ENCODE measurements at regions of chr2 and their contacts with region 1.

Region 1: DNA sequence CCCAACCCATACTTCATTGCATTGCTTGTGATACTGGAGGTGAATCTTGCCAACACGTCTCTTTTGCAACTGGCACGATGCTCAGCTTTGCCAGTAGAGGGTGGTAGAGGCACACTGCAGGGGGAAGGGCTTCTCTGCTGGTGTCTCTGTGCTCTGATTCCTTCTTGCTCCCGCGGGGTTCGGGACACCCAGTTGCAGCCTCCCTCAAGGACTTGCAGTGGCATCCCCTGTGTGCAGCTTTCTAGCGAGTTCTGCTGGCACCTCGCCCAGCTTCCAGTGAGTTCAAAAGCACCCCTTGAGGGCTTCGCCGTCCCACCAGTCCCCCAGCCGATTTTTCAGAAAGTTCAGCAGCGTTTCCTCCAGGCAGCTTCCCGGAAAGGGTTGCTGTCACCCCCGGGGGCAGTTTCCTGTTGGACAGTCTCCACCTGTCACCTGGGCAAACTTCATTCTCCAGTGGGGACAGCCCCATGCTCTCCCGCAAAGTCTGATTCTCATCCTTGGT is 35.3 kb upstream of the EN1 start:
- DNase-seq: peak; percentile 41 to 79
- ATAC-seq: peak; percentile 88 to 92 (median 90)
- H3K4me3 ChIP-seq: peak overlapping the region; percentile 30
- H3K4me3 Mint-ChIP-seq: peak overlapping the region; percentile 81
- H3K27ac ChIP-seq: no peak overlapping the region
- H3K27ac Mint-ChIP-seq: peak overlapping the region in 1 of 2 donors; percentile 44
- H3K4me1 ChIP-seq: peaks cover 4% of the 10 kb centered on the region
- H3K4me1 Mint-ChIP-seq: peaks cover 17 to 19% of the 10 kb centered on the region in 2 donors
- H3K27me3 ChIP-seq: no peaks in the 10 kb centered on the region
- H3K27me3 Mint-ChIP-seq: peaks cover 18 to 24% of the 10 kb centered on the region in 2 donors
- CTCF ChIP-seq: peak; percentile 74

Region 2: DNA sequence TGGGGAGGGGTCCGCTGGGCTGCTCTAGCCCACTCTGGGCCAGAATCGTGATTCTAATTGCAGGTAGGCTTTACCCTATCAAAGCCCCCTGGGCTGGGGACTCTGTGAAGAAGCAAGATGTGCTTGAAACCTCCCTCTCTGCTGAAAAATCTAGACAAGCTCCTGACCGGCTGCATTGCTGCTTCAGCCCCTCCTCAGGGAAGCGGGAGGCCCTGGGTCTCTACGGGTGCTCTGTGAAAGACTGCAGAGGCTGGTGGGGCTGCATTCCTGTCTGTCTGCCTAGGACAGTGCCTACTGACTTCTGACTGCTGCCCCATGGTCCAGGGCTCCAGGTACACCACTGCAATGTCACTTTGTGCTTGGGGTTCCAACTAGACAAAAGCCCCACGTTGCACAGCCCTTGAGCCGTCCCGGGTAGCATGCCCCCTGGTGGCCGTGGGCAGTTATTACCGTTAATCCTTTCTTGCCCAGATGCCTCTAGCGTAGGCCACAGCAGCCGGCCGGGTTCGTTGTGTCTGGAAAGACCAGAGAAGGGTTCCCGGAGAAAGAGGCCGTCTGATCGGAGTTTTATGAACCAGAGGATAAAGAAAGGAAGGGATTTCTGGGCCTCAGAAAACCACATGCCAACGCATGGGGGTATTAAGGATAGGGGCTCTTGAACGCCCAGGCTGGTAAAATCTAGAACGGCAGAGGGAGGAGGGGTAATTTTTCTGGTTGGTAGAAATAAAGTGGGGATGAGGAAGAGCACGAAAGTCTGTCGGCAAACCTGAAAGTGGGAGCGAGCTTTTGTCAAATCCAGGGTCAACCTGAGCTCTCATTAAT is 291.7 kb after region 1 on chr2:
- intact Hi-C with region 1: loop called (anchors 2 kb)
- DNase-seq: peak; percentile 43 to 70
- ATAC-seq: peak; percentile 53 to 78 (median 56)
- H3K4me3 ChIP-seq: no peak overlapping the region
- H3K4me3 Mint-ChIP-seq: no peak overlapping the region
- H3K27ac ChIP-seq: no peak overlapping the region
- H3K27ac Mint-ChIP-seq: no peak overlapping the region
- H3K4me1 ChIP-seq: no peaks in the 10 kb centered on the region
- H3K4me1 Mint-ChIP-seq: no peaks in the 10 kb centered on the region
- H3K27me3 ChIP-seq: no peaks in the 10 kb centered on the region
- H3K27me3 Mint-ChIP-seq: no peaks in the 10 kb centered on the region
- CTCF ChIP-seq: peak; percentile 82

Region 3: DNA sequence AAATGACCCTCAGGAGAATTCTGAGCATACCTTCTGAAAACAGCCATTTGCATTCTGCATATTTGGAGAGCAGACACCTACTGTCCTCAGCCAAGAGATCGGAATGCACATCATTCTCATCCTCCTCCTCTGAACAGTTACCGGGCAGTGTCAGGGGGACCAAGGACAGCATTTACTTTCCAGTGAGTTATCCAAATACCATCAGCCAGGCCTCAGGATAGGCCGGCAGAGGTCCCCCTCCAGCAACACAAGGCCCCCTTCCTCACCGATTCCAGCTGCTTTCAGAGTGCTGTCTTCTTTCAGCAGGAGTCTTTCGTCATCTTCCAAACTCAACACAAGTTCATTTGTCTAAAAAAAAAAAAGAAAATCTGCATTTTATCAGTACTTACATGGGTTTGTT is 428.6 kb after region 1 on chr2:
- intact Hi-C with region 1: loop called (anchors 1 kb)
- DNase-seq: no peak
- ATAC-seq: no peak
- H3K4me3 ChIP-seq: no peak overlapping the region
- H3K4me3 Mint-ChIP-seq: no peak overlapping the region
- H3K27ac ChIP-seq: no peak overlapping the region
- H3K27ac Mint-ChIP-seq: no peak overlapping the region
- H3K4me1 ChIP-seq: no peaks in the 10 kb centered on the region
- H3K4me1 Mint-ChIP-seq: no peaks in the 10 kb centered on the region
- H3K27me3 ChIP-seq: no peaks in the 10 kb centered on the region
- H3K27me3 Mint-ChIP-seq: no peaks in the 10 kb centered on the region
- CTCF ChIP-seq: peak; percentile 3

Region 4: GRCh38 chr2:119476301-119477021 is 593.7 kb after region 1 on chr2:
- intact Hi-C with region 1: loop called (anchors 1 kb)
- DNase-seq: peak; percentile 36 to 56
- ATAC-seq: peak; percentile 60 to 81 (median 78)
- H3K4me3 ChIP-seq: no peak overlapping the region
- H3K4me3 Mint-ChIP-seq: no peak overlapping the region
- H3K27ac ChIP-seq: no peak overlapping the region
- H3K27ac Mint-ChIP-seq: no peak overlapping the region
- H3K4me1 ChIP-seq: no peaks in the 10 kb centered on the region
- H3K4me1 Mint-ChIP-seq: peaks cover 5% of the 10 kb centered on the region in 2 donors
- H3K27me3 ChIP-seq: no peaks in the 10 kb centered on the region
- H3K27me3 Mint-ChIP-seq: peaks cover 0 to 3% of the 10 kb centered on the region in 2 donors
- CTCF ChIP-seq: peak; percentile 91

Region 5: GRCh38 chr2:119659601-119660342 is 777.0 kb after region 1 on chr2:
- intact Hi-C with region 1: loop called (anchors 5 kb)
- DNase-seq: peak in 1 of 2 donors; percentile 68
- ATAC-seq: peak; percentile 50 to 61 (median 55)
- H3K4me3 ChIP-seq: no peak overlapping the region
- H3K4me3 Mint-ChIP-seq: no peak overlapping the region
- H3K27ac ChIP-seq: no peak overlapping the region
- H3K27ac Mint-ChIP-seq: no peak overlapping the region
- H3K4me1 ChIP-seq: peaks cover 2% of the 10 kb centered on the region
- H3K4me1 Mint-ChIP-seq: peaks cover 13 to 16% of the 10 kb centered on the region in 2 donors
- H3K27me3 ChIP-seq: no peaks in the 10 kb centered on the region
- H3K27me3 Mint-ChIP-seq: peaks cover 11 to 24% of the 10 kb centered on the region in 2 donors
- CTCF ChIP-seq: peak; percentile 73

Measured in natural killer cell (primary cell).